ENCODE measurements at regions of chr4 and their contacts with region 1.

Region 1: DNA sequence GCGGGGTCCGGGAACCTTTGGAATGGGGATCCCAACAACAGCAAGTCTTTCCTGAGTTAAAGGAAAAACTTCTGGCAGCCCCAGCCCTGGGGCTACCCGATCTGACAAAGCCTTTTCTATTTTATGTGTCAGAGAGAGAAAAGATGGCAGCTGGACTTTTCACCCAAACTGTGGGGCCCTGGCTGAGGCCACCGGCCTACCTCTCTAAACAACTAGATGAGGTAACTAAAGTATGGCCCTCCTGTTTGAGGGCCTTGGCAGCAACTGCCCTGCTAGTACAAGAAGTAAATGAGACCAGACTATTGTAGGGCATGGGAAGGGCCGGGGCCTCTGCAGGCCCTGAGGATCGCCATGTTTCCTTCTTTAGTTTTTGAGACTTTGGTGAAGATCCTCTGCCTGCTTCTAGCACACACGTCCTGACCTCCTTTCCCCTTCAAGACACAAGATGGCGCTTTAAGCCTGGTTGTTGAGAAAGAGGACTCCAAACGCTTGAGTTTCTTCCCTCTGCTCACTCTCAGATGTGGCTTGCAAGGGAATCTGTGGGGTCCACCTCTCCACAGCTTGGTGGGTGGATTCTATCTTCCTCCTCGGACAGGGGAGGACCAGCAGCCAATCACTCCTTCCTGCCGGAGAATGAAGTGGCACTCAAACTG is 18.5 kb upstream of the DRD5 start:
- DNase-seq: peak; percentile 45
- H3K4me3 Mint-ChIP-seq: no peak overlapping the region
- H3K27ac Mint-ChIP-seq: no peak overlapping the region
- H3K4me1 Mint-ChIP-seq: no peaks in the 10 kb centered on the region
- H3K27me3 Mint-ChIP-seq: peaks cover 20% of the 10 kb centered on the region

Region 2: DNA sequence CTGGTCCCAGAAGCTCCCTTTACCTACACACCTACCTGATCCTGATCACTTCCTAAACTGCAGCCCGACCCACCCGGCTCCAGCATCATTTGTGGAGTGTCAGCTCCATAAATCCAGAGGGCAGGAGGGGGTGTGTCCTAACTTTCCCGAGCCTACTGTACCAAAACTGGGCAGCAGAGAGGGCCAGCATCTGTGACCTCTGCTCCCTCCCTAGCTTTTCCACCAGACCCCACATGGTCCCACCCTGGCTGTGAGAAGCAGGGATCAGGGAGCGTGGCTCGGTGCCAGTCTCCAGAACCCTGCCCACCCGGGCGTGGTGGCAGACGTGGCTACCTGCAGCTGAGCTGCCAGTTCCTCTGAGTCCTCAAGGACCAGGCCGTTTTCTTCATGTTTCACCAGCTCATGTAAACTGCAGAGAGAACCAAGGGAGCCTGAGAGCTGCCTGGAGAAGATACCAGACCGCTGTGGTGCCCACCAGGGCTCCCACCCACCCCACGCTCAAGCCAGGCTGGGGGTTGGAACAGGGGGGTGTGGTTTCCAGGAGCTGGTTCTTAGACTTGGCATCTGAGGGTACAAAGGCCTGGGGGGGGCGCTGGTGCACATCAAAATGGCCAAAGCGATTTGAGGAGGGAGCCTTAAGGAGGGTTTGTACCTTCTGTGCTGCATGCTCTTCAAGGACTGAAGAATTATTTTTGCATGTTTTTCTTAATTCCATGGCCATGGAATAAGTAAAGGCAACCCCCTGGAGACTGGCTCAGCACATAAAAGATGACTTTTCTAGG is 58.2 kb before region 1 on chr4:
- CTCF ChIA-PET with region 1: no interaction called
- POLR2A ChIA-PET with region 1: no interaction called
- intact Hi-C with region 1: loop called (anchors 1 kb)
- DNase-seq: peak; percentile 27
- H3K4me3 Mint-ChIP-seq: no peak overlapping the region
- H3K27ac Mint-ChIP-seq: no peak overlapping the region
- H3K4me1 Mint-ChIP-seq: peaks cover 11% of the 10 kb centered on the region
- H3K27me3 Mint-ChIP-seq: no peaks in the 10 kb centered on the region

Region 3: DNA sequence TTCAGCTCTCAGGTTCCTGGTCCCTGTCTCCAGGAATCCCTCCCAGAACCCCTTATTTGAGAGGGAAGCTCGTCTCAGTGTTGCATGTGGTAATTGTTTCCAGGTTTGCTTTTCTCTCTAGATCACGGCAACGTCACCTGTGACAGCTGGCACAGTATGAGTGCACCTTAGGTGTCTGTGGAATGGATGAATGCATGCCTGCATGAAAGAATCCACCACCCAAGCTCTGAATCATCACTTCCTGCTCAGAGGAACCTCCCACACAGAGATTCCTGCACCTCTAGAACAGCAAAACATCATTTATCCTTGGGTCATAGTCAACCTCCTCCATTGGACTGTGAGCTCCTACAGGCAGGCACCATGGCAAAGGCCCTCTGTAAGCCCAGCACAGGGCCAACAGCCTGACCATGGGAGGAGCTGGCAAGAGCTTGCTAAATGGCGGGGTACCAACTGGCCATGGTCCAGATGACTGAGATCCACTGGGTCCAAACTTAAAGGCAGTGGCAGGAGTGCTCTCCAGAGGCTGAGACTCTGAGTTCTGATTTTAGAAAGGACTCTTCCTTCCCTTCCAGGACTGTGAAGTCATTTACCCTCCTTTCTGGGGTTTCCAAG is 142.1 kb after region 1 on chr4:
- CTCF ChIA-PET with region 1: no interaction called
- POLR2A ChIA-PET with region 1: no interaction called
- intact Hi-C with region 1: loop called (anchors 10 kb)
- DNase-seq: peak; percentile 51
- H3K4me3 Mint-ChIP-seq: no peak overlapping the region
- H3K27ac Mint-ChIP-seq: no peak overlapping the region
- H3K4me1 Mint-ChIP-seq: peaks cover 6% of the 10 kb centered on the region
- H3K27me3 Mint-ChIP-seq: peaks cover 1% of the 10 kb centered on the region

Region 4: GRCh38 chr4:10013722-10014121 is 250.8 kb after region 1 on chr4:
- CTCF ChIA-PET with region 1: interaction called, 41 read pairs
- POLR2A ChIA-PET with region 1: no interaction called
- intact Hi-C with region 1: loop called (anchors 1 kb)
- DNase-seq: peak; percentile 67
- H3K4me3 Mint-ChIP-seq: no peak overlapping the region
- H3K27ac Mint-ChIP-seq: no peak overlapping the region
- H3K4me1 Mint-ChIP-seq: peaks cover 2% of the 10 kb centered on the region
- H3K27me3 Mint-ChIP-seq: no peaks in the 10 kb centered on the region

Region 5: DNA sequence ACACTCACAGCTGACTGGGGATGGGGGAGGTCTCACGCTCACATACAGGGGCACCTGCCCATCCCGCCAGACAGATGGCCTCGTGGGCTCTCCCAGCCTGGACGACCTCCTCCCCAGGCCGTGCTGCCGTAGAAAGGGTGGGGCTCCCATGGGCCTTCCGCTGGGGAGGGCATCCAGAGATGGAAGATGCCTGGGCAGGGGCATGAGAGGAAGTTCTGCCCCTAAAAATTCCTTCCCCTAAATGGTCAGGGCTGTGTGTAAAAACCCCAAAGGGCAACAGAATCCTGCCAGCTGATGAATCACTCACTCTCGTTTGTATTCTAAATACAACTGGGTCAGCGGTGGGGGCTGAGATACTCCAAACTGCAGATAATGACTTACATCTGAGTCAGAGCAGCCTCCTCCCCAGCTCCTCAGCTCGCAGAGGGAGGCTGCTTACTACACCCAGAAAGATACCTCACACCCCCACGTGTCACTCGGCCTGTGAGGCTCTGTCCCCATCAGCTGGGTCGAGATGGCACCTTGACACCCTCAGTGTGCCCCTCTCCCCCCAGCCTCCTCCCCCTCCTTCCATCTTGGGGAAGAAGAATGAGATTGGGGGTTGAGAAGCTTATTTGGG is 343.6 kb after region 1 on chr4:
- CTCF ChIA-PET with region 1: no interaction called
- POLR2A ChIA-PET with region 1: no interaction called
- intact Hi-C with region 1: loop called (anchors 10 kb)
- DNase-seq: peak; percentile 90
- H3K4me3 Mint-ChIP-seq: peak overlapping the region; percentile 66
- H3K27ac Mint-ChIP-seq: peak overlapping the region; percentile 86
- H3K4me1 Mint-ChIP-seq: peaks cover 98% of the 10 kb centered on the region
- H3K27me3 Mint-ChIP-seq: no peaks in the 10 kb centered on the region

Measured in activated CD4-positive, alpha-beta memory T cell treated with anti-CD3 and anti-CD28 coated beads for 36 hours (primary cell).